Heart right ventricle (tissue), 16 donors: ENCODE measurements at regions of chr2 and their contacts with region 1.

Region 1: GRCh38 chr2:41853427-41854216 is 194.2 kb upstream of the PKDCC start:
- DNase-seq: peak in 1 of 2 donors; percentile 39
- ATAC-seq: peak in 2 of 8 donors; percentile 11 to 27
- H3K4me3 ChIP-seq: no peak overlapping the region
- H3K27ac ChIP-seq: no peak overlapping the region
- H3K4me1 ChIP-seq: no peaks in the 10 kb centered on the region
- H3K27me3 ChIP-seq: peaks cover 0 to 13% (median 4%) of the 10 kb centered on the region in 7 donors
- CTCF ChIP-seq: peak; percentile 51 to 80 (median 72)

Region 2: GRCh38 chr2:42086500-42086953 is 232.9 kb after region 1 on chr2:
- intact Hi-C with region 1: loop called in 9 of 10 experiments (anchors 1 to 5 kb)
- DNase-seq: peak in 1 of 2 donors; percentile 48
- ATAC-seq: peak in 6 of 8 donors; percentile 52 to 74 (median 66)
- H3K4me3 ChIP-seq: no peak overlapping the region
- H3K27ac ChIP-seq: no peak overlapping the region
- H3K4me1 ChIP-seq: peaks cover 0 to 32% (median 7%) of the 10 kb centered on the region in 9 donors
- H3K27me3 ChIP-seq: no peaks in the 10 kb centered on the region
- CTCF ChIP-seq: peak; percentile 50 to 88 (median 75)

Region 3: GRCh38 chr2:42196403-42197267 is 343.0 kb after region 1 on chr2:
- intact Hi-C with region 1: loop called in 1 of 10 experiments (anchors 10 kb)
- DNase-seq: peak in 1 of 2 donors; percentile 61
- ATAC-seq: peak; percentile 50 to 91 (median 80)
- H3K4me3 ChIP-seq: peak overlapping the region in 3 of 10 donors; percentile 12 to 23 (median 13)
- H3K27ac ChIP-seq: peak overlapping the region in 4 of 10 donors; percentile 29 to 57 (median 41)
- H3K4me1 ChIP-seq: peaks cover 0 to 66% (median 20%) of the 10 kb centered on the region in 9 donors
- H3K27me3 ChIP-seq: no peaks in the 10 kb centered on the region
- CTCF ChIP-seq: peak; percentile 19 to 79 (median 61)

Region 4: DNA sequence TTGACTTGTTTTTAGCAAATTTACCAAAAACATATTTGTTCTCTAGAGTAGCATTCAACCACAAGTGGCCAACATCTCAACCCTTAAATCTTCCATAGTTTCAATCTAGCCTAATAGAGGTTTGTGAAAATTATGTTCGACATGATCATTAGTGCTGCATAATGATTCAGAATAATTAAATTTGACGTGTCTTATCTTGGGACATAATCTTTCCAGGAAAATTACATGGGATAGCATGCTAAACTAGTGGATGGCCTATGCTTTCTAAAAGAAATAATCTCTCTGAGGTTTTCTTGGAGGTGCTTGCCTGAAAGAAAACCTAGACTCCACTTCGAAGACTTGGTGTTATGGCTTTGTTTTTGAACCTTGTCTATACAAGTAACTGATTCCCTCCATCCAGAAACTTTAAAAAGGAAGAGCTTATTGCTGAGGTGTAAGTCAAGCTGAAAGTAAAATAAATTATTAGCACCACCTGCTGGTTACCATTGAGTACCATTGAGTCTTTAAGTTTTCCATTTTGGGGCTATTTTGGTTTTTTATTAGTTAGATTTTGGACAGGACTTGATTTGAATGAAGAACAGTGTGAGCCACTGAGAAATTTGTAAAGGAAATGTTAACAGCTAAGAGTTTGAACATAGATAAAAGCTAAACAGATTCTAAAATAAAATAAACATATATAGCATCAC is 474.7 kb after region 1 on chr2:
- intact Hi-C with region 1: loop called in 1 of 10 experiments (anchors 10 kb)
- DNase-seq: no peak
- ATAC-seq: no peak
- H3K4me3 ChIP-seq: no peak overlapping the region
- H3K27ac ChIP-seq: no peak overlapping the region
- H3K4me1 ChIP-seq: no peaks in the 10 kb centered on the region
- H3K27me3 ChIP-seq: no peaks in the 10 kb centered on the region
- CTCF ChIP-seq: peak in 8 of 9 donors; percentile 19 to 57 (median 50)